Ascending aorta (tissue), 2 donors: ENCODE measurements at regions of chr13 and their contacts with region 1.

Region 1: GRCh38 chr13:33125821-33126570 is 109.8 kb downstream of the KL start:
- DNase-seq: peak in 1 of 2 donors; percentile 81
- H3K4me3 ChIP-seq: peak overlapping the region in 1 of 2 donors; percentile 23
- H3K27ac ChIP-seq: peak overlapping the region; percentile 73 to 74
- H3K4me1 ChIP-seq: peaks cover 11 to 20% of the 10 kb centered on the region in 2 donors
- H3K27me3 ChIP-seq: no peaks in the 10 kb centered on the region
- CTCF ChIP-seq: no peak

Region 2: DNA sequence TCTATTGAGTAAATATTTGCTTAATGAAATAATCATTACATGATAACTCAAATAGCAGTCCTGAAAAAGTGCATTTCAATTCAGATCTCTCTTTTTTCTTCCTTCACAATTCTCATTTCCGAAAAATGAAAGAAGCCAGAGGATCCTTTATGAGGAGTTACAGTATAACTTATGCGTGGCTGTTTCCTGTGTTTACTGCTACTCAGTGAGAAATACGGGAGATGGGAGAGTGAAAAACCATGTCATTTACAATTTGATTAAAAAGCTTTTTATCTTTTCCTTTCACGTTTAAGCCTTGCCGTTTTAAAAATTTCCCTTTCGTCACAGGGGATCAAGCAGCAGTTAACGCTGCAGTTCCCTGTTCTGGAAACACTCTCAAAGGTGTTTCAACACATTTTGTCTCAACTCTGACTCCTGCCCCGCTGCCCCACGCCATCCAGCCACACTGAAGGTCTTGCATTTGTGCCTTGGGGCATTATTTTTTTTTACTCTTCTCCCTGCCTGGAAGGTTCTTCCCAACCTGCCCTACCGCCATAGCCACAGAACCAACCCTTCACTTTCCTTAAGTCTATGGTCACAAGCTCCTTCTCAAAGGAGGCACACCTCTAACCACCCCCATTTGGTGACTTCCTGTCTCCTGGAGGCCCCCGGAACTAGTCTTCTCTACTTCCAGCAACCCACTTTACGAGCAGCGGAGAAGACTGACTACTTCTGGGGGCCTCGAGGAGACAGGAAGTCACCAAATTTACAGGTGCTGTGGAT is 92.8 kb before region 1 on chr13:
- intact Hi-C with region 1: no loop called
- DNase-seq: no peak
- H3K4me3 ChIP-seq: no peak overlapping the region
- H3K27ac ChIP-seq: no peak overlapping the region
- H3K4me1 ChIP-seq: no peaks in the 10 kb centered on the region
- H3K27me3 ChIP-seq: no peaks in the 10 kb centered on the region
- CTCF ChIP-seq: no peak

Region 3: DNA sequence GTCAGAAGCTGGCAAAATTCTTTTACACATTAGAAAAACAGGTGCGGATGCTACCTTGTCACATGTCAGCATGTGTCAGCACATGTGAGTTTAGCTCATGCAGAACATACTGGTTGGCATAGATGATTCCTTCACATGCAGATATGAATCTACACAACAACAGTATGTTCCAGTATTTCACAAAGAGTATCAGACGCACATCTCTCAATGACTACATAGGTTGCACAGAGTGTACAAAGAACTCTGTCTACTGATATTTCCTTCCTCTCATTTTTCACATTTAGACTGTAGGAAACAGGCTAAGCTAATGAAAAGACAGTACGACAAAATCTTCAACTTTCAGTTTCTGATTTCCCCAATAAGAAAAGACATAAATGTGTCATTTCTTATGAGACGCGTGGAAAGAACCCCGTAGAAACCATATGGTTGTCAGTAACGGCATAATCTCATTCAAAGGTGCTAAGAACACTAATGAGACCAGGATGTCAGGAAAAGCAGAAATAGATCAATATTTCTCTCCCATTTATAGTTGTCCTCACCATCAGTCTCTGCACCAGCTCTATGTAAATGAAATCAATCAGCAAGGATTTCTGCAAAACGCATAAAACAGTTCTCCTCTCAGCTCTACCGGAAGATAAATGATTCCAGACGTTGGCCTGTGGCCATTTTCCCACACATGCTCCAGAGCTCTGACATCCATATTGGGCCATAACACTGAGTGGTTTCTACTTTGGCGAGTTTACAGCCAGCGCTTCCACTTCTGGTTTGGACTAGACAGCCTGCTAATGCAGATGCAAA is 78.3 kb after region 1 on chr13:
- intact Hi-C with region 1: loop called (anchors 5 kb)
- DNase-seq: peak in 1 of 2 donors; percentile 87
- H3K4me3 ChIP-seq: peak overlapping the region; percentile 52 to 67
- H3K27ac ChIP-seq: peak overlapping the region; percentile 63 to 82
- H3K4me1 ChIP-seq: peaks cover 9 to 41% of the 10 kb centered on the region in 2 donors
- H3K27me3 ChIP-seq: no peaks in the 10 kb centered on the region
- CTCF ChIP-seq: no peak